GM12878 (cell line): ENCODE measurements at regions of chr1 and their contacts with region 1.

Region 1: GRCh38 chr1:41751804-41752513 is 166.8 kb downstream of the HIVEP3 start:
- DNase-seq: peak; percentile 86
- ATAC-seq: peak; percentile 83
- H3K4me3 ChIP-seq: peak overlapping the region; percentile 18; the same call in 1 of the 2 replicates
- H3K27ac ChIP-seq: peak overlapping the region; percentile 83
- H3K4me1 ChIP-seq: peaks cover 55% of the 10 kb centered on the region
- H3K27me3 ChIP-seq: no peaks in the 10 kb centered on the region
- CTCF ChIP-seq: no peak
- EP300 ChIP-seq: peak; percentile 77 to 80; a peak in 3 of 4 replicates
- POLR2A ChIP-seq: 0 out of 2 replicates have a peak, but pooled peaks have one; percentile 17
- RAD21 ChIP-seq: no peak; the same call in 1 of the 2 replicates

Region 2: GRCh38 chr1:41720861-41721410 is 31.0 kb before region 1 on chr1:
- CTCF ChIA-PET with region 1: interaction called, 6 read pairs
- POLR2A ChIA-PET with region 1: interaction called, 6 read pairs
- RAD21 ChIA-PET with region 1: interaction called, 85 read pairs
- SMC1A ChIA-PET with region 1: interaction called, 69 read pairs
- in situ Hi-C with region 1: no loop called
- intact Hi-C with region 1: no loop called
- DNase-seq: no peak
- ATAC-seq: peak; percentile 80
- H3K4me3 ChIP-seq: no peak overlapping the region
- H3K27ac ChIP-seq: peak overlapping the region; percentile 21; the same call in 1 of the 2 replicates
- H3K4me1 ChIP-seq: peaks cover 69% of the 10 kb centered on the region
- H3K27me3 ChIP-seq: no peaks in the 10 kb centered on the region
- CTCF ChIP-seq: no peak
- EP300 ChIP-seq: no peak
- POLR2A ChIP-seq: no peak
- RAD21 ChIP-seq: no peak

Region 3: GRCh38 chr1:41765152-41765551 is 13.2 kb after region 1 on chr1:
- CTCF ChIA-PET with region 1: interaction called, 14 read pairs
- POLR2A ChIA-PET with region 1: no interaction called
- RAD21 ChIA-PET with region 1: interaction called, 9 read pairs
- SMC1A ChIA-PET with region 1: interaction called, 20 read pairs
- in situ Hi-C with region 1: no loop called
- intact Hi-C with region 1: no loop called
- DNase-seq: no peak
- ATAC-seq: peak; percentile 62
- H3K4me3 ChIP-seq: no peak overlapping the region
- H3K27ac ChIP-seq: no peak overlapping the region
- H3K4me1 ChIP-seq: peaks cover 28% of the 10 kb centered on the region
- H3K27me3 ChIP-seq: no peaks in the 10 kb centered on the region
- CTCF ChIP-seq: no peak
- EP300 ChIP-seq: no peak
- POLR2A ChIP-seq: no peak
- RAD21 ChIP-seq: no peak

Region 4: DNA sequence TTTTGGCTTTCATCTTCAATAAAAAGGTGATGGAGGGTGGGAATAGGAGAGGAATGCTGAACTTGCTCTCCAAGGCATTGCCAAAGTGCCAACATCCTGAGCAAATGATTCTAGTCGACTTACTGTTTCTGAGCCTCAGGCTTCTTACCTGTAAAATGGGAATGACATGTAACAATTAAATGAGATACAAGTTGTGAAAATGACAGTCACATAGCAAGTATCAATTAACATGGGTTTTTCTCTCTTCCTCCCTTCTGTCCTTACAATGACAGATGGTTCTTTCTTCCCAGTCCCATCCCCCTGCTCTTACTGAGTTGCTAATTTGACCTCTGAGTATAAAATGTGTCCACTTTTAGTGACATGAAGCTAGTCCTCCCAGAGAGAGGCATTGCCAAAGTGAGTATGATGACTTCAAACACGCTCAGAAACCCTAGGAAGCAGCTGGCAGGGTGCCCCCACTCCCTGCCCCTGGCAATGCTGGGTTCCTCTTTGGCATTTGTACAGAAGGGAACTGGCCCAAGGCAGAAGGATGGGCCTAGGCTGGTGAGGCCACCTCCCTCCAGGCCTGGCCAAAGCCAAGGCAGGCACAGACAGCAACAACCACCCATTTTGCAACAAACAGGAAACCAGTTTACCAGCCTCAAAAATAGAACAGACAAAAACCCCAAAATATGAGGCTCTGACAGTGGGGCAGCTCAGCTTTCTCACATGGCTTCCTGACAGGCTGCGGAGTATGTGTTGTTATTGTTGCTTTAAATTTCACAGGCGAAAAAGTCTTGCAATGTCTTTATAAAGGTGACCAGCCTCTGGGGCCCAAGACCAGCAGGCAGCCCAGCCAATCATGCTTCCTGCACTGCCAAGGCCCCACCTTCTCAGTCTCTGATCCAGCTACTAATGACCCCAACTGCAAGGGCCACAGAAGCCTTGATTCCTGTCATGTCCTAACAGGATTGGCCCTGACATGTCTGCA is 50.9 kb after region 1 on chr1:
- CTCF ChIA-PET with region 1: interaction called, 6 read pairs
- POLR2A ChIA-PET with region 1: interaction called, 33 read pairs
- RAD21 ChIA-PET with region 1: interaction called, 32 read pairs
- SMC1A ChIA-PET with region 1: interaction called, 39 read pairs
- in situ Hi-C with region 1: no loop called
- intact Hi-C with region 1: loop called (anchors 2 kb)
- DNase-seq: peak; percentile 85
- ATAC-seq: peak; percentile 50
- H3K4me3 ChIP-seq: no peak overlapping the region
- H3K27ac ChIP-seq: peak overlapping the region; percentile 74
- H3K4me1 ChIP-seq: peaks cover 86% of the 10 kb centered on the region
- H3K27me3 ChIP-seq: no peaks in the 10 kb centered on the region
- CTCF ChIP-seq: no peak
- EP300 ChIP-seq: peak in 1 of 2 experiments; percentile 44; a peak in 2 of 4 replicates
- POLR2A ChIP-seq: no peak
- RAD21 ChIP-seq: no peak

Region 5: DNA sequence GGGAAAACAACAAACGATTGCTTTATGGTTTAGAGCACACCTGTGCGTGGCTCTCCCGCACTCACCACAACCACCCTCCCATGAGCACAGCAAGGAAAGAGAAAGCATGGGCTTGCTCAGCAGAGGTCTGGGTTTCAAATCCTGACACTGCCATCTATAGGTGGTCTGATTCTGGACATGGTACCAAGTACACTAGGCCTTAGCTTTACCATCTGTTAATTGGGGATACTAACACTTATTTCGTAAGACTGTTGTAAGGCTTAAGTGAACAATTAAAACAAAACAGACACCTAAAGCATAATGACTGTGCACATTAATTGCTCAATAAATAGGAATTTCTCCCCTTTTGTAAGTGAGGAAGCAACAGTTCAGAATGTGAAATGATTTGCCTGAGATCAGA is 116.6 kb after region 1 on chr1:
- CTCF ChIA-PET with region 1: no interaction called
- POLR2A ChIA-PET with region 1: interaction called, 5 read pairs
- RAD21 ChIA-PET with region 1: interaction called, 5 read pairs
- SMC1A ChIA-PET with region 1: interaction called, 7 read pairs
- in situ Hi-C with region 1: no loop called
- intact Hi-C with region 1: loop called (anchors 5 kb)
- DNase-seq: peak; percentile 63
- ATAC-seq: peak; percentile 96
- H3K4me3 ChIP-seq: no peak overlapping the region
- H3K27ac ChIP-seq: peak overlapping the region; percentile 27; the same call in 1 of the 2 replicates
- H3K4me1 ChIP-seq: peaks cover 19% of the 10 kb centered on the region
- H3K27me3 ChIP-seq: no peaks in the 10 kb centered on the region
- CTCF ChIP-seq: peak; percentile 60 to 71 (median 66); a peak in 5 of 6 replicates
- EP300 ChIP-seq: no peak
- POLR2A ChIP-seq: no peak
- RAD21 ChIP-seq: peak; percentile 60

Region 6: GRCh38 chr1:41955461-41956159 is 203.7 kb after region 1 on chr1:
- CTCF ChIA-PET with region 1: no interaction called
- POLR2A ChIA-PET with region 1: no interaction called
- RAD21 ChIA-PET with region 1: no interaction called
- SMC1A ChIA-PET with region 1: no interaction called
- in situ Hi-C with region 1: no loop called
- intact Hi-C with region 1: loop called (anchors 10 kb)
- DNase-seq: peak; percentile 87
- ATAC-seq: peak; percentile 92
- H3K4me3 ChIP-seq: no peak overlapping the region; the same call in 1 of the 2 replicates
- H3K27ac ChIP-seq: peak overlapping the region; percentile 67
- H3K4me1 ChIP-seq: peaks cover 26% of the 10 kb centered on the region
- H3K27me3 ChIP-seq: no peaks in the 10 kb centered on the region
- CTCF ChIP-seq: no peak
- EP300 ChIP-seq: peak; percentile 43 to 81; a peak in 3 of 4 replicates
- POLR2A ChIP-seq: no peak
- RAD21 ChIP-seq: no peak